ENCODE measurements at regions of chr9 and their contacts with region 1.

Region 1: GRCh38 chr9:105244003-105244733 is at the start of gene SLC44A1:
- DNase-seq: peak; percentile 77 to 95 (median 89)
- ATAC-seq: peak; percentile 83
- H3K4me3 ChIP-seq: peak within 1 kb of the TSS; percentile 61 to 63
- H3K4me3 Mint-ChIP-seq: peak within 1 kb of the TSS; percentile 90
- H3K27ac ChIP-seq: peak within 1 kb of the TSS; percentile 48 to 72
- H3K27ac Mint-ChIP-seq: peak within 1 kb of the TSS; percentile 90
- H3K4me1 ChIP-seq: peaks cover 12% of the 10 kb centered on the region
- H3K4me1 Mint-ChIP-seq: peaks cover 28% of the 10 kb centered on the region
- H3K27me3 ChIP-seq: peaks cover 0 to 3% of the 10 kb centered on the region in 2 experiments
- H3K27me3 Mint-ChIP-seq: peaks cover 10% of the 10 kb centered on the region
- CTCF ChIP-seq: no peak
- total RNA-seq, gene SLC44A1: 2.4 to 2.5 TPM

Region 2: GRCh38 chr9:104093647-104094533 is 1150.3 kb before region 1 on chr9 and contains the start of gene SMC2:
- CTCF ChIA-PET with region 1: no interaction called
- POLR2A ChIA-PET with region 1: no interaction called
- intact Hi-C with region 1: loop called (anchors 2 to 5 kb)
- DNase-seq: peak; percentile 90 to 96 (median 94)
- ATAC-seq: peak; percentile 96
- H3K4me3 ChIP-seq: peak within 1 kb of the TSS; percentile 58 to 79
- H3K4me3 Mint-ChIP-seq: peak within 1 kb of the TSS; percentile 98
- H3K27ac ChIP-seq: peak within 1 kb of the TSS; percentile 78 to 98
- H3K27ac Mint-ChIP-seq: peak within 1 kb of the TSS; percentile 98
- H3K4me1 ChIP-seq: peaks cover 21% of the 10 kb centered on the region
- H3K4me1 Mint-ChIP-seq: peaks cover 44% of the 10 kb centered on the region
- H3K27me3 ChIP-seq: no peaks in the 10 kb centered on the region
- H3K27me3 Mint-ChIP-seq: no peaks in the 10 kb centered on the region
- CTCF ChIP-seq: no peak
- total RNA-seq, gene SMC2: 1.9 to 2.0 TPM

Region 3: GRCh38 chr9:104968025-104968982 is 275.9 kb before region 1 on chr9:
- CTCF ChIA-PET with region 1: no interaction called
- POLR2A ChIA-PET with region 1: interaction called, 3 read pairs
- intact Hi-C with region 1: loop called (anchors 1 to 5 kb)
- DNase-seq: peak; percentile 77 to 91 (median 88)
- ATAC-seq: peak; percentile 98
- H3K4me3 ChIP-seq: peak overlapping the region; percentile 80 to 86
- H3K4me3 Mint-ChIP-seq: peak overlapping the region; percentile 91
- H3K27ac ChIP-seq: peak overlapping the region; percentile 11 to 47
- H3K27ac Mint-ChIP-seq: peak overlapping the region; percentile 73
- H3K4me1 ChIP-seq: peaks cover 14% of the 10 kb centered on the region
- H3K4me1 Mint-ChIP-seq: peaks cover 13% of the 10 kb centered on the region
- H3K27me3 ChIP-seq: peaks cover 0 to 4% of the 10 kb centered on the region in 2 experiments
- H3K27me3 Mint-ChIP-seq: peaks cover 5% of the 10 kb centered on the region
- CTCF ChIP-seq: no peak

Region 4: GRCh38 chr9:105127863-105128220 is 116.3 kb before region 1 on chr9:
- CTCF ChIA-PET with region 1: no interaction called
- POLR2A ChIA-PET with region 1: no interaction called
- intact Hi-C with region 1: loop called in 1 of 2 experiments (anchors 2 kb)
- DNase-seq: peak; percentile 25 to 89 (median 58)
- ATAC-seq: peak; percentile 99
- H3K4me3 ChIP-seq: peak overlapping the region in 1 of 2 experiments; percentile 6
- H3K4me3 Mint-ChIP-seq: peak overlapping the region; percentile 56
- H3K27ac ChIP-seq: no peak overlapping the region
- H3K27ac Mint-ChIP-seq: peak overlapping the region; percentile 46
- H3K4me1 ChIP-seq: peaks cover 40% of the 10 kb centered on the region
- H3K4me1 Mint-ChIP-seq: peaks cover 48% of the 10 kb centered on the region
- H3K27me3 ChIP-seq: no peaks in the 10 kb centered on the region
- H3K27me3 Mint-ChIP-seq: peaks cover 2% of the 10 kb centered on the region
- CTCF ChIP-seq: peak; percentile 23

Region 5: DNA sequence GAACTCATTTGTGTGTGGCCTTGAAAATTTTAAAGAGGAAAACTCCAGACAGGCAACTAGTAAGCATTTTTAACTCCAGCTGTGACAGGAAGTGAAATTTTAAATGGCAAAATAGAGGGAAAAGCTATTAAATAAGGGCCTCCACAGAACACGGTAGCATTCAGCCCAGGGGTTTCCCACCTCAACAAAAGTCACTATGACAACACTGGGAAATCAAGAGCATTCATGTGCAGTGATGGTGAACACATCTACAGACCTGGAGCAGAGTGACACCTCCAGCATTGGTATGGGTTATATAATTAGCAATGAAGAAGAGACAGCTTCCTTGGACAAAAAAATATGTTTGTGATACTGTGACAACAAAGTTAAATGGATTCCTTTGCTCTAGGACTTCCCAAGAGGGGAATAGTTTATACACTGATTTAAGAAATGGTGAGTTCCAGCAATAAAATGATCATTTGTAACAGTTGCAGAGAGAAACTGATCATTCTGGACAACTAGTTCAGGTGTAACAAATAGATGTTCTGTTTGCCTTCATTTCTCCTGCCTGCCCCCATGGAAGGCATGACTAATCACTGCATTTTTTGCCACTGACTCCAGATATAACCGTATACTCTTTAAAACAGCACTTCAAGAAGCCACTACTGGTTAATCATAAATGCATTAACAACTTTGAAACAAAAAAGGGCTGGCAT is 93.0 kb before region 1 on chr9:
- CTCF ChIA-PET with region 1: no interaction called
- POLR2A ChIA-PET with region 1: no interaction called
- intact Hi-C with region 1: no loop called
- DNase-seq: no peak
- ATAC-seq: no peak
- H3K4me3 ChIP-seq: no peak overlapping the region
- H3K4me3 Mint-ChIP-seq: no peak overlapping the region
- H3K27ac ChIP-seq: no peak overlapping the region
- H3K27ac Mint-ChIP-seq: no peak overlapping the region
- H3K4me1 ChIP-seq: no peaks in the 10 kb centered on the region
- H3K4me1 Mint-ChIP-seq: peaks cover 21% of the 10 kb centered on the region
- H3K27me3 ChIP-seq: no peaks in the 10 kb centered on the region
- H3K27me3 Mint-ChIP-seq: no peaks in the 10 kb centered on the region
- CTCF ChIP-seq: no peak

Region 6: GRCh38 chr9:105205787-105206495 is 38.2 kb before region 1 on chr9:
- CTCF ChIA-PET with region 1: no interaction called
- POLR2A ChIA-PET with region 1: no interaction called
- intact Hi-C with region 1: no loop called
- DNase-seq: no peak
- ATAC-seq: no peak
- H3K4me3 ChIP-seq: no peak overlapping the region
- H3K4me3 Mint-ChIP-seq: no peak overlapping the region
- H3K27ac ChIP-seq: no peak overlapping the region
- H3K27ac Mint-ChIP-seq: no peak overlapping the region
- H3K4me1 ChIP-seq: no peaks in the 10 kb centered on the region
- H3K4me1 Mint-ChIP-seq: no peaks in the 10 kb centered on the region
- H3K27me3 ChIP-seq: no peaks in the 10 kb centered on the region
- H3K27me3 Mint-ChIP-seq: no peaks in the 10 kb centered on the region
- CTCF ChIP-seq: no peak

Region 7: GRCh38 chr9:105275938-105276337 is 31.8 kb after region 1 on chr9:
- CTCF ChIA-PET with region 1: no interaction called
- POLR2A ChIA-PET with region 1: no interaction called
- intact Hi-C with region 1: no loop called
- DNase-seq: no peak
- ATAC-seq: no peak
- H3K4me3 ChIP-seq: no peak overlapping the region
- H3K4me3 Mint-ChIP-seq: no peak overlapping the region
- H3K27ac ChIP-seq: no peak overlapping the region
- H3K27ac Mint-ChIP-seq: no peak overlapping the region
- H3K4me1 ChIP-seq: no peaks in the 10 kb centered on the region
- H3K4me1 Mint-ChIP-seq: no peaks in the 10 kb centered on the region
- H3K27me3 ChIP-seq: no peaks in the 10 kb centered on the region
- H3K27me3 Mint-ChIP-seq: no peaks in the 10 kb centered on the region
- CTCF ChIP-seq: no peak

Region 8: DNA sequence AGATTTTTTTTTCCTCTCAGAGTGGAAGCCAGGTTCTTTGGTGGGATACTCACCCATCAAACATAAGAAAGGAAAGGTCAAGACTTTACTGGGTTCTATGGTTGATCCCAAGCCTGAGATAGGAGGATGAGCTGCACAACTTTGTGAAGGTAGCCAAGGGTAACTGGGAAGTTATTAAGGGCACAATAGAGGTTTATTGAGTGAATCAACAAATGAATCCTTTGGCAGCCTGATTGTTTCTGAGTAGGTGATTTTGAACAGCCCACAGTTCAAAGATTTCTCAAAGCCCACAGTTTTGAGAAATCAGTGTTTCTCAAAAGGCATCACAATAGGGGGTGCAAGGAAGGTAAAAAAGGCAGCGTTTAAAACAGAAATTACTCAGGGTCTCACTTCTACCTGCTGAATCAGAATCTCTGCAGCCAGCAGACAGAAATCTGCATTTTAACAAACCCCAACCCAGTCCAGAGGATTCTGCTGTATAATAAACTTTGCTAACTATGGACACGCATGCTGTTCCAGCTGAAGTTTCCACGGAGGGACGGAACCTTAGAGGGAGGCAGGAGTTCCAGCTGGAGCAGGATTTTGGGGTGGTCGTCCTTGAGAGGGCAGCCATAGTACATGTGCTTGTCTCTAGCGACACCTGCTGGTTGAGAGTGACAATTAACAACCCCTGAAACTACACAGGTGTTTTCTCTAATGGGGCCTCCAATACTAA is 170.9 kb after region 1 on chr9:
- CTCF ChIA-PET with region 1: interaction called, 3 read pairs
- POLR2A ChIA-PET with region 1: no interaction called
- intact Hi-C with region 1: loop called (anchors 1 to 2 kb)
- DNase-seq: peak; percentile 28 to 82 (median 64)
- ATAC-seq: peak; percentile 85
- H3K4me3 ChIP-seq: no peak overlapping the region
- H3K4me3 Mint-ChIP-seq: no peak overlapping the region
- H3K27ac ChIP-seq: no peak overlapping the region
- H3K27ac Mint-ChIP-seq: no peak overlapping the region
- H3K4me1 ChIP-seq: peaks cover 2% of the 10 kb centered on the region
- H3K4me1 Mint-ChIP-seq: peaks cover 6% of the 10 kb centered on the region
- H3K27me3 ChIP-seq: peaks cover 4 to 6% of the 10 kb centered on the region in 2 experiments
- H3K27me3 Mint-ChIP-seq: peaks cover 33% of the 10 kb centered on the region
- CTCF ChIP-seq: peak; percentile 87

Region 9: GRCh38 chr9:105557771-105558610 is 313.8 kb after region 1 on chr9 and contains the start of gene FKTN:
- CTCF ChIA-PET with region 1: no interaction called
- POLR2A ChIA-PET with region 1: no interaction called
- intact Hi-C with region 1: loop called (anchors 2 to 5 kb)
- DNase-seq: peak; percentile 64 to 86 (median 81)
- ATAC-seq: peak; percentile 96
- H3K4me3 ChIP-seq: peak within 1 kb of the TSS; percentile 72 to 93
- H3K4me3 Mint-ChIP-seq: peak within 1 kb of the TSS; percentile 96
- H3K27ac ChIP-seq: peak within 1 kb of the TSS; percentile 45 to 69
- H3K27ac Mint-ChIP-seq: peak within 1 kb of the TSS; percentile 80
- H3K4me1 ChIP-seq: peaks cover 8% of the 10 kb centered on the region
- H3K4me1 Mint-ChIP-seq: peaks cover 19% of the 10 kb centered on the region
- H3K27me3 ChIP-seq: no peaks in the 10 kb centered on the region
- H3K27me3 Mint-ChIP-seq: no peaks in the 10 kb centered on the region
- CTCF ChIP-seq: no peak
- total RNA-seq, gene FKTN: 2.1 to 3.2 TPM